ENCODE measurements at regions of chr9 and their contacts with region 1.

Region 1: GRCh38 chr9:71025201-71025600 is 96.2 kb downstream of the TRPM3 start:
- DNase-seq: no peak
- H3K4me3 ChIP-seq: no peak overlapping the region
- H3K27ac ChIP-seq: peak overlapping the region in 13 of 59 donors; percentile 3 to 51 (median 18)
- H3K27me3 ChIP-seq: no peaks in the 10 kb centered on the region
- CTCF ChIP-seq: no peak

Region 2: DNA sequence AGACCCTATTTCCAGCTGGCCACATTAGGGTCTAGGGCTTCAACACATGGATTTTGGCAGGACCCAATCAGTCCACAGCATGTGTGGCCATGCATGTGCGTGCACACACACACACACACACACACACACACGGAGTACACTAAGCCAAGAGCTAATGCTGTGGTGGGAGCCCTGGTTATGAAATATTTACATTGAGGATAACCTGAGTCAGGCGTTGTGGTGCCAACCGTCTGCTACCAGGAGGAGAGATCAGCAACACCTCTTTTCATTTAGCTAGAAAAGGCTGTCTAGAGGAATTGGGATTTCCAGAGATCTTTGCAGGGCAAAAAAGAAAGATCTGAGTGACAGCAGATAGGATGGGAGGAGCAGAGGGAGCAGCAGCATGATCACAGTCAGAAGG is 45.2 kb before region 1 on chr9:
- intact Hi-C with region 1: loop called in 1 of 2 experiments (anchors 10 kb)
- DNase-seq: no peak
- H3K4me3 ChIP-seq: no peak overlapping the region
- H3K27ac ChIP-seq: no peak overlapping the region
- H3K27me3 ChIP-seq: no peaks in the 10 kb centered on the region
- CTCF ChIP-seq: no peak